HEK293T (cell line): ENCODE measurements at regions of chr2 and their contacts with region 1.

Region 1: GRCh38 chr2:177164584-177165052 is 48.0 kb upstream of the HNRNPA3 start:
- DNase-seq: peak; percentile 73

Region 2: DNA sequence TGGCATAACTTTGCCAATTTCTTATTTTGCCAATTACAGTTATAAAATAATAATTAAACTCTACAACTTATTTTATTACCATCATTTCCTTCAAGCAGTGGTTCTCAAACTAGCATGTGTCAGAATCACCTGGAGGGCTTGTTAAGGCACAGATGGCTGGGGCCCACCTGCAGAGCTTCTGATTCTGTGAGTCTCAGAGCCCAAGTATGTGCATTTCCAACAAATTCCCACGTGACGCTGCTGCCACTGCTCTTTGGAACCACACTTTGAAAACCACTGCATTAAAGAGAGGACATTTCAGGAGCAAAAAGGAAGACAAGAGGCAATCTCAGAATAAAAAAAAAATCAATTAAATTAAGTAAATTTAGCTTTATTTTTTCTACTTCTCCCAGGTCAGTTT is 46.0 kb before region 1 on chr2:
- CTCF ChIA-PET with region 1: no interaction called
- POLR2A ChIA-PET with region 1: no interaction called
- DNase-seq: no peak

Region 3: DNA sequence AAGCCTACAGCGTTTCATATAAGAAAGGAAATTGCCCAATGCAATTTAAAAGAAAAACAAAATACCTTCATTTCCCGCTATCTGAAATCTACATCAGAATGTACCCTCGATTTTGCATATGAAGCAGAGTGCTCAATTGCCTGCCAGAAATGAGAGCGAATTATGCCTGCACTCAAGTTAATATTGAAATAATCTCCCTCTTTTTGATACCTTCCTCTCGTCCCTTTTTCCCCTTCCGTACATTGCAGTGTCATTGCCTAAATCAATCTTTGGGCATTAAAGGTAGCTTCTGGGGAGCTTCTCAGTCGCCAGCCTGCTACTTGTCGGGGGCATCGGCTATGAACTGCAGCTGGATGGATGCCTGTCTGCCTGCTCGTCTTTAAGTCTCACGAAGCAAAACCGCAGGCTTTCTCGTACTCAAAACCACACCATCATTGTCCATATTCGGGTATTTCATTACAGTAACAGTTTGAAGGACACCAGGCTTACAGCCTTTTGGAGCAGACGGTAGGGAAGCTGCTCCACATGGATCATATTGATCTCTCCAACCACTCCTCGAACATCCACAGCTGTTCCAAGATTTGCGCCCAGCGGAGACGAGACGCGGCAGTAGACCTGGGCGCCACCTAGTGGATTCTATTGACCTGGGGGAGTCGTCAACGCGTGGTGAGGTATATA is 16.0 kb before region 1 on chr2:
- CTCF ChIA-PET with region 1: interaction called, 11 read pairs
- POLR2A ChIA-PET with region 1: no interaction called
- DNase-seq: peak; percentile 80

Region 4: DNA sequence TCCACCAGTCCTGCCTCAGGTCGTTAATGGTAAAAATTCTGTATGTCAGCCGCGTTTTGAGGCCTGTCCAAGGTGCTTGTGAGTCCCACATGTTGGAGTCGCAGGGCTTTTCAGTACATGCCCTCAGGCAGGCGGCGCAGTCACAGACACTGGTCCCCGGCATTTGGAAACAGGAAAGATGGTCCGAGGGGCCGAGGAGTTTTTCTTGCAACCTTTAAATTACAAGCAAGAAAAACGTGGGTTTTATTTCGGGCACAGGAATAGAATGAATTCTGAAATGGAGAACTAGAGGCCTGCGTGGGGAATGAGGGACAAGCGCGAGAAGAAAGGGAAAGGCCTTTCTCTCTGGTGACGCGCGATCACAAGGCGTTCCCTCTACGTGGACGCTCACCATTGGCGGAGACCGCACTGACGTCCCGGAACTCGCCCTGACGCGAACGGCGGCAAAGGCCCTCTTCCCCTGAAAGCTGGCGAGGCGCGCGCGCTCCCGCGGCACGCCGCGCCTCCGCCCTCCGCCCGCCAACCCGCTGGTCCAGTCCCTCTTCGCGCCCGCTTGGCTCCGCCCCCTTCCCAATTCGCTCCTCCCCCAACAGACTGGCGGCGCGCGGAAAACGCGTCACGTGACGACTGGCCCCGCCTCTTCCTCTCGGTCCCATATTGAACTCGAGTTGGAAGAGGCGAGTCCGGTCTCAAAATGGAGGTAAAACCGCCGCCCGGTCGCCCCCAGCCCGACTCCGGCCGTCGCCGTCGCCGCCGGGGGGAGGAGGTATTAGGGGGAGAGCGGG is 47.7 kb after region 1 on chr2 and contains the start of gene HNRNPA3:
- CTCF ChIA-PET with region 1: no interaction called
- POLR2A ChIA-PET with region 1: interaction called, 10 read pairs
- DNase-seq: peak; percentile 98

Region 5: GRCh38 chr2:177254433-177255226 is 90.0 kb after region 1 on chr2:
- CTCF ChIA-PET with region 1: interaction called, 16 read pairs
- POLR2A ChIA-PET with region 1: no interaction called
- DNase-seq: peak; percentile 66

Region 6: DNA sequence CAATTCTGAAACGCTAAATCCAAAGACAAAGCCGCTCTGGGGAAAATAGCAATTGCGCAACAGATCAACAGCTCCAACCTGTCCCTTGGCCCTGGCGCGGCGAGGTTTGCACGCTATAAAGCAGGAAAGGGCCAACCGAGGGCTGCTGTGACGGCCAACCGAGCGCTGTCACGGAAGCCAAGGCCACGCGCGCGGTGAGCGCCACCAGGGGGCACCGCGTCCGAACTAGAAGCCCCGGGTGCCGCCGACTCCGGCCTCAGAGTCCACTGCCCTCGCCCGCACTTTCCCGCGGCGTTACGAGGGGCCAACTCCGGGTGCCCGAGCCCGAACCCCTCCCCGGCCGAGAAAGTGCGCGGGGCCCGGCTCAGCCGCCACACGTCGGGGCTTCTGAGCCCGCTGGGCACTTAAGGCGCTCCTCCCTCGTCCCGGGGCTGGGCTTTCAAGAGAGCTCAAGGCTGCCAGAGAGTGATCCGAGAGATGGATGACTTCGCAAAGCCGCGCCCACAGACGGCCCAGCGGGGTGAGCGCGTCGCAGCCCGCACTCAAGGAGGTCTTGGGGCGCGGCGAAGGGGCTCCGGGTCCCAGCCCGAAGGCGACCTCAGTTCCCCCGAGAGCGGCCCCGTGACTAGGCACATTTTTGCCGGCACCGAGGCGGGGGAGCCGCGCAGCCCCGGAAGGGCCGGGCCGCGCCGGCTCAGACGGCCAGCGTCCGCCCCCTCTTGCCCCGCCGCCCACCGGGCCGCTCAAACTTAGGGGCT is 99.0 kb after region 1 on chr2:
- CTCF ChIA-PET with region 1: interaction called, 23 read pairs
- POLR2A ChIA-PET with region 1: interaction called, 35 read pairs
- DNase-seq: peak; percentile 81

Region 7: DNA sequence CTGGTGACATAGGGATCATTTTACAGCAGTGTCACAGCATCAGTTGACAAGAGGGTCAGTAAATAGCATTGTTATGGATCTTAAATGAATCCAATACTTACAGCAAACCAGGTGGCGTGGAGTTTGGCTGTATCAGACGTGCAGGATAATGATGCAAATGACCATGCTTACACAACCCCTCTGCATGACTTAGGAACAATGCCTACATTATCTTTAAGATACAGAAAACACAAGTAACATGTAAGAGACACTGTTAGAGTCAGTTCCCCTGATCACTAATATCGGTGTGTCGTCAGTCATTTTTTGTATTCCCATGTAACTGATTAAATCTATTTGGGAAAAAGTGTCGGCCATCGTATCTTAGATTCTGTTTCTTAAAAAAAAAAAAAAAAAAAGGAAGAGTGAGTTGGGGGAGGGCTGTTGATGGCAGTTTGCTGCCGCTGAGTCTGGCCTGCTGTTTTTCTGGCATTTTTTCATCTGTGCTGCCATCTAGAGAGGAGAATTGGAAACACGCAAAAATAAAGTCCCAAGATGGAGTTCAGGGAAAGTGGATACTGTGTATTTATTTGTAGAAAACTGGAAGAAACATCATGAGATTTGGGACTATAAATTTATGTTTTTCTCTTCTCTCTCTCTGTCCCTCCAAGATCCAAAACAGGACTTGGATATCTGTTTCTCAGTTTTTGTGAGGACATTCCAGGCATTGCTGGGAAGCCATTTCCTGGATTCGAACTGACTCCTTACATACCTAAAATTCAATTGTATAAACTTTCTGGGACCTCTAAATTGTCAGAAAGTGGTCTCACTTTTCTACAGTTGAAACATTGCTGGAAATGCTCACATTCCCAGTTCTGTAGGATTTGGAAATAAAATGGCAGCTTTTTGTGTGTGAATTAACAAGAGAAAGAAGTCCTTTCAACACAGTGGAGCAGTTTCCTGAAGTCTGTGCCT is 167.7 kb after region 1 on chr2:
- CTCF ChIA-PET with region 1: interaction called, 35 read pairs
- POLR2A ChIA-PET with region 1: no interaction called
- DNase-seq: peak; percentile 71